WTC11 (cell line): ENCODE measurements at regions of chr12 and their contacts with region 1.

Region 1: GRCh38 chr12:123761841-123762714 is at the start of gene DNAH10:
- DNase-seq: peak; percentile 84
- ATAC-seq: peak; percentile 81
- H3K4me3 Mint-ChIP-seq: peak within 1 kb of the TSS; percentile 80
- H3K27ac Mint-ChIP-seq: no peak within 1 kb of the TSS
- H3K4me1 Mint-ChIP-seq: peaks cover 13% of the 10 kb centered on the region
- H3K27me3 Mint-ChIP-seq: peaks cover 17% of the 10 kb centered on the region
- CTCF ChIP-seq: no peak
- total RNA-seq, gene DNAH10: 0.07 to 0.11 TPM (median 0.09 TPM) in 3 replicates

Region 2: DNA sequence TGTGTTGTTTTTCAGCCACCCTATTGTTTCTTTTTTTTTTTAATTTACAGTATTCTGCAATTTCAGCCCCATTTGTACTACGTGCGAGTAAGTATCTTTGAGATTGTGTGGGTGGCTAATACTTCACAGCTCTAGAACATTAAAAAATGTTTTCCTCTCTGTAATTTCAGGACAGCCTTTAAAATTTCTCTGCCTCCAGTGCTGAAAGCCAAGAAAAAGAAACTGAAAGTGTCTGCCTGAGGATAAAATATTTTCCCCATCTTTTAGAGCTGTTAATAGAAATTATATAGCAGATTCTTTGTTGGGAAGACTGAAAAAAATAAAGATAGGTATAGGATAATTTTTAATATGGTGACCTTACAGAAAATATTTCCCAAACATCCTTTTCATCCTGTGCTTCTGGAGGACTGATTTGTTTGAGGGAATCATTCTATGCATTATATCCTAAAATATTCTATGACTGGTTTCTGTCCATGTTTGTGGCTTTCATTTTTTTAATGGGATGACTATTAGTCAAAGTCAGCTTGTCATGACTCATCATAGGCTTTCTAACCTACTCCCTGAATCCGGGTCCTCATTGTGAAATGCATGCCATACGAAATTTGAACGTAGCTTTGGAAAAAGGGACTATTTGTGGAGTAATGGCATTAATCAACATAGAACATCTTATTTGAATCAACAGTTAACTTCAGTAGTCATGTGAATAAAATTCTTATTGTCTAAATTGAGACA is 101.9 kb before region 1 on chr12:
- CTCF ChIA-PET with region 1: no interaction called
- POLR2A ChIA-PET with region 1: no interaction called
- DNase-seq: no peak
- ATAC-seq: no peak
- H3K4me3 Mint-ChIP-seq: no peak overlapping the region
- H3K27ac Mint-ChIP-seq: no peak overlapping the region
- H3K4me1 Mint-ChIP-seq: no peaks in the 10 kb centered on the region
- H3K27me3 Mint-ChIP-seq: no peaks in the 10 kb centered on the region
- CTCF ChIP-seq: no peak

Region 3: DNA sequence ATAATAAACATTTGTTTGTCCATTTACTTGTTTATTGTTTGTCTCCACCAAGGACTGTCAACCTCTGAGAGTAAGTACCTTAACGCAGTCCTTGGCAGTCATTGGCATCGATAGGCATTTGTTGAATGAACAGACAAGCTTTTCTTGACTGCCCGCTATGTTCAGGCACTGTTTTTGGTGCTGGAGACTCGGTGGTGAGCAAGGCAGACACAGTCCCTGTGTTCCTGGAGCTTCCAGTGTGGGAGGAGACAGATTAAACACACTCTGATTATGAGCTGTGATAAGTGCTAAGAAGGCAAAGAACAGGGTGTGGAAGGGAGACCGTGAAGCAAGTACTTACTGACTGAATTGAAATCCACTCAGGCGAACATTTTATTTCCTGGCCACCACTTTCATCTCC is 48.7 kb before region 1 on chr12:
- CTCF ChIA-PET with region 1: interaction called, 11 read pairs
- POLR2A ChIA-PET with region 1: no interaction called
- DNase-seq: no peak
- ATAC-seq: no peak
- H3K4me3 Mint-ChIP-seq: peak overlapping the region; percentile 97
- H3K27ac Mint-ChIP-seq: 0 out of 2 replicates have a peak overlapping the region, but pooled peaks have one; percentile 40
- H3K4me1 Mint-ChIP-seq: peaks cover 16% of the 10 kb centered on the region
- H3K27me3 Mint-ChIP-seq: no peaks in the 10 kb centered on the region
- CTCF ChIP-seq: no peak